ENCODE measurements at regions of chr3 and their contacts with region 1.

Region 1: DNA sequence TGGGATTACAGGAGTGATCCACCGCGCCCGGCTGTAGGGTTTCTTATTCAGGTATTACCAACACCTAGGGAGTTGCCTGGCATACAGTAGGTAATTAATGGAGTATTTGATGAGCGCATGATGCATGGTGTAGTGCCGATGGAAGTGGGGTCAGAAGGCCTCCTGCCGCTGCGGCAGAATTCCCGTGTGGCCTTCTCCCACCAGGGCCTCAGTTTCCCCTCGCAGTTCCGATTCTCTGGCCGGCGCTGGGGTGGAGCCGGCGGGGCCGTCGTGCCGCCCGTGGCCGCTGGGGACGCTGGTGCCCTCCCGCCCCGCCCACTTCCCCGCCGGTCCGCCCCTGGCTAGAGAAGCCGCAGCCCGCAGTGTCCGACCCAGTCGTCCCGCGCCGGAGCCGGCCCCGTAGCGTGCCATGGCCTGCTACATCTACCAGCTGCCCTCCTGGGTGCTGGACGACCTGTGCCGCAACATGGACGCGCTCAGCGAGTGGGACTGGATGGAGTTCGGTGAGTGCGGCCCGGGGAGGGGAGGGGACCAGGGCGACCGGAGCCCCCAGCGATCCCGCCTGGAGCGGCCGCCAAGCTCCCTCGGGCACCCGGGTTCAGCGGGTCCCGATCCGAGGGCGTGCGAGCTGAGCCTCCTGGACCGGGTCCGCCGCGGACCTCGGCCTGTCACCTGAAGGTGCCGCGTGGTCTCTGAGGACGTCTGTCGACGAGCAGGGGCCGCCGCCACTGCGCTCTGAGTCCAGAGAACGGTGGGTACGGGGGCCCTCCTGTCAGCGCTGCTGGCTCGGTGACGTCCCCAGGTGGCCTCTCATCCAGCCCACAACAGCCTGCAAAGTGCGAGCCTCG is at the start of gene IRAK2:
- DNase-seq: peak; percentile 18 to 77 (median 52)
- ATAC-seq: peak; percentile 87
- H3K4me3 ChIP-seq: peak within 1 kb of the TSS; percentile 90 to 91
- H3K4me3 Mint-ChIP-seq: peak within 1 kb of the TSS; percentile 82
- H3K27ac ChIP-seq: peak within 1 kb of the TSS; percentile 48 to 59
- H3K27ac Mint-ChIP-seq: peak within 1 kb of the TSS; percentile 52
- H3K4me1 ChIP-seq: peaks cover 16% of the 10 kb centered on the region
- H3K4me1 Mint-ChIP-seq: peaks cover 19% of the 10 kb centered on the region
- H3K27me3 ChIP-seq: no peaks in the 10 kb centered on the region
- H3K27me3 Mint-ChIP-seq: no peaks in the 10 kb centered on the region
- CTCF ChIP-seq: peak; percentile 97
- total RNA-seq, gene IRAK2: 1.6 to 1.7 TPM

Region 2: DNA sequence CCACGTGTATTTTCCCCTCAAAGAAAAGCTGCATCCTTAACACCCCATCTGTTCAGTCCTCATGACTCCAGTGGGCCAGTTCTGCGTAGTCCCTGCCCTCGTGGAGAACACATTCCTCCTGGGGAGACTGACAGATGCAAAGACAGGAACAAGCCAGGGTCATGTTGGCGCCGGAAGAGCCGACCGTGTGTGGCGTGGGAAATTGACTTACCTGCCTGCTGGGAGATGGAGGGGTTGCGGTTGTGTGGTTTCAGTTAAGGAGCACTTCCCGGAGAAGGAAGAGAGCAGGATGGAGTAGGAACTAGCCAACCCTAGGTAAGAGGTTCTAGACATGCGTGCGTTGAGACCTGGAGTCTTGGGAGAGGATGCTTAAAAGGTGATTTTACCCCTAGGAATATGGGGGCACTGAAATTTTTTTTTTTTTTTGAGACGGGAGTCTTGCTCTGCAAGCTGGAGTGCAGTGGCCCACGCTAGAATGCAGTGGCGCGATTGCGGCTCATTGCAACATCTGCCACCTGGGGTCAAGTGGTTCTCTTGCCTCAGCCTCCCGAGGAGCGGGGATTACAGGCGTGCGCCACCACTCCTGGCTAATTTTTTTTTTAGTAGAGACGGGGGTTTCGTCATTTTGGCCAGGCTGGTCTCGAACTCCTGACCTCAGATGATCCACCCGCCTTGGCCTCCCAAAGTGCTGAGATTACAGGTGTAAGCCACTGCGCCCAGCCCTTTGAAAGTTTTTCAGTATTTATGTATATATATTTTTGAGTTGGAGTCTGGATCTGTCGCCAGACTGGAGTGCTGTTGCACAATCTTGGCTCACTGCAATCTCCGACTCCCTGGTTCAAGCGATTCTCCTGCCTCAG is 21.8 kb before region 1 on chr3:
- CTCF ChIA-PET with region 1: no interaction called
- POLR2A ChIA-PET with region 1: interaction called, 3 read pairs
- intact Hi-C with region 1: loop called in 1 of 2 experiments (anchors 1 kb)
- DNase-seq: peak in 3 of 9 experiments; percentile 22 to 51 (median 33)
- ATAC-seq: no peak
- H3K4me3 ChIP-seq: peak overlapping the region; percentile 73 to 74
- H3K4me3 Mint-ChIP-seq: peak overlapping the region; percentile 93
- H3K27ac ChIP-seq: peak overlapping the region in 1 of 2 experiments; percentile 54
- H3K27ac Mint-ChIP-seq: peak overlapping the region; percentile 98
- H3K4me1 ChIP-seq: peaks cover 32% of the 10 kb centered on the region
- H3K4me1 Mint-ChIP-seq: peaks cover 32% of the 10 kb centered on the region
- H3K27me3 ChIP-seq: no peaks in the 10 kb centered on the region
- H3K27me3 Mint-ChIP-seq: no peaks in the 10 kb centered on the region
- CTCF ChIP-seq: no peak

Region 3: GRCh38 chr3:10185804-10186762 is 21.3 kb after region 1 on chr3:
- CTCF ChIA-PET with region 1: interaction called, 13 read pairs
- POLR2A ChIA-PET with region 1: interaction called, 6 read pairs
- intact Hi-C with region 1: no loop called
- DNase-seq: peak in 3 of 9 experiments; percentile 33 to 69 (median 53)
- ATAC-seq: peak; percentile 74
- H3K4me3 ChIP-seq: no peak overlapping the region
- H3K4me3 Mint-ChIP-seq: peak overlapping the region; percentile 47
- H3K27ac ChIP-seq: peak overlapping the region in 1 of 2 experiments; percentile 77
- H3K27ac Mint-ChIP-seq: peak overlapping the region; percentile 92
- H3K4me1 ChIP-seq: peaks cover 46% of the 10 kb centered on the region
- H3K4me1 Mint-ChIP-seq: peaks cover 54% of the 10 kb centered on the region
- H3K27me3 ChIP-seq: no peaks in the 10 kb centered on the region
- H3K27me3 Mint-ChIP-seq: no peaks in the 10 kb centered on the region
- CTCF ChIP-seq: no peak

Region 4: DNA sequence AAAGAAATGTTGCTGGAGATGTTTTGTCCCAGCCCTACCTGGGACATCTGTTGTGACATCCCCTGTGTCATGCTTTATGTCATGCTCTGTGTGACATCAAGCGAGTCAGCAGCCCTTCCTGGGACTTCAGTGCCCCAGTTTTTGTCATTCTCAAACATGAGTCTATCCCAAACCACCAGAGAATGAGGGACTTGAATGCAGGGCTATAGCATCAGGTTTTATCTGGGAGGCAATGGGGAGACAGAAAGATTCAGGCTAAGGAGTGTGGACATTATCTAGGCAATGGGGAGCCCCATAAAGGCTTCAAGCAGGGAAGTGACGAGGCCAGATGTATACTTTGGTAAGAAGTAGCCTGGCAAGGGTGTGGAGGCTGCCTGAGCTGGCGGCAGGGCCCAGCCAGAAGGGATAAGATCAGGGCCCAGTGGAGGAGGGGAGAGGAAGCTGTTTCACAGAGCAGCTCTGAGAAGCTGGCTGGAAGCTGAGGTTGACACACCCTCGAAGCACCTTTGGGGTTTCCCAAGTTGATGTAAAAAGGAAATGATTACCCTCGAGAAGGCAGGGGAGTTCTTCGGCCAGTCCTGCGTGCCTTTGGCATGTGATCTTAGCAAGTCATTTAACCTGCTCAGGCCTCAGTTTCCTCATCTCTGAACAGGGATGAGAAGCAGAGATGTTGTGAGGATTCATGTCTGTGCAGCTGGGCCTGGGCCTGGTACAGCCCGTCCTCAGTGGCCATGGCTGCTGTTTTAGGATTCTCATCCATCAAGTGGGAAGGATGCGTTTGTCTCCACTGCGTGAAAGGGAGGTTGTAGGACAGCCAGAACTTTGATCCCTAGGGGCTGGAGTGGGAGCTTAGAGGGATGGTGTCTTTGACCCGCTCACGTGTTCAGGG is 34.2 kb after region 1 on chr3:
- CTCF ChIA-PET with region 1: interaction called, 12 read pairs
- POLR2A ChIA-PET with region 1: interaction called, 7 read pairs
- intact Hi-C with region 1: loop called (anchors 1 to 2 kb)
- DNase-seq: peak; percentile 37 to 91 (median 73)
- ATAC-seq: peak; percentile 68
- H3K4me3 ChIP-seq: no peak overlapping the region
- H3K4me3 Mint-ChIP-seq: peak overlapping the region; percentile 64
- H3K27ac ChIP-seq: peak overlapping the region; percentile 15 to 87
- H3K27ac Mint-ChIP-seq: peak overlapping the region; percentile 91
- H3K4me1 ChIP-seq: peaks cover 58% of the 10 kb centered on the region
- H3K4me1 Mint-ChIP-seq: peaks cover 63% of the 10 kb centered on the region
- H3K27me3 ChIP-seq: no peaks in the 10 kb centered on the region
- H3K27me3 Mint-ChIP-seq: no peaks in the 10 kb centered on the region
- CTCF ChIP-seq: no peak

Region 5: GRCh38 chr3:10224784-10225665 is 60.3 kb after region 1 on chr3:
- CTCF ChIA-PET with region 1: interaction called, 7 read pairs
- POLR2A ChIA-PET with region 1: no interaction called
- intact Hi-C with region 1: loop called (anchors 1 kb)
- DNase-seq: peak; percentile 34 to 81 (median 65)
- ATAC-seq: peak; percentile 70
- H3K4me3 ChIP-seq: no peak overlapping the region
- H3K4me3 Mint-ChIP-seq: peak overlapping the region; percentile 7
- H3K27ac ChIP-seq: peak overlapping the region in 1 of 2 experiments; percentile 30
- H3K27ac Mint-ChIP-seq: peak overlapping the region; percentile 75
- H3K4me1 ChIP-seq: peaks cover 24% of the 10 kb centered on the region
- H3K4me1 Mint-ChIP-seq: peaks cover 51% of the 10 kb centered on the region
- H3K27me3 ChIP-seq: no peaks in the 10 kb centered on the region
- H3K27me3 Mint-ChIP-seq: no peaks in the 10 kb centered on the region
- CTCF ChIP-seq: peak; percentile 86

Region 6: GRCh38 chr3:10646531-10647335 is 482.0 kb after region 1 on chr3:
- CTCF ChIA-PET with region 1: no interaction called
- POLR2A ChIA-PET with region 1: no interaction called
- intact Hi-C with region 1: no loop called
- DNase-seq: peak in 1 of 9 experiments; percentile 31
- ATAC-seq: no peak
- H3K4me3 ChIP-seq: no peak overlapping the region
- H3K4me3 Mint-ChIP-seq: no peak overlapping the region
- H3K27ac ChIP-seq: no peak overlapping the region
- H3K27ac Mint-ChIP-seq: no peak overlapping the region
- H3K4me1 ChIP-seq: no peaks in the 10 kb centered on the region
- H3K4me1 Mint-ChIP-seq: no peaks in the 10 kb centered on the region
- H3K27me3 ChIP-seq: no peaks in the 10 kb centered on the region
- H3K27me3 Mint-ChIP-seq: peaks cover 13% of the 10 kb centered on the region
- CTCF ChIP-seq: no peak

Measured in CD8-positive, alpha-beta T cell (primary cell).